ENCODE measurements at regions of chrX and their contacts with region 1.

Region 1: DNA sequence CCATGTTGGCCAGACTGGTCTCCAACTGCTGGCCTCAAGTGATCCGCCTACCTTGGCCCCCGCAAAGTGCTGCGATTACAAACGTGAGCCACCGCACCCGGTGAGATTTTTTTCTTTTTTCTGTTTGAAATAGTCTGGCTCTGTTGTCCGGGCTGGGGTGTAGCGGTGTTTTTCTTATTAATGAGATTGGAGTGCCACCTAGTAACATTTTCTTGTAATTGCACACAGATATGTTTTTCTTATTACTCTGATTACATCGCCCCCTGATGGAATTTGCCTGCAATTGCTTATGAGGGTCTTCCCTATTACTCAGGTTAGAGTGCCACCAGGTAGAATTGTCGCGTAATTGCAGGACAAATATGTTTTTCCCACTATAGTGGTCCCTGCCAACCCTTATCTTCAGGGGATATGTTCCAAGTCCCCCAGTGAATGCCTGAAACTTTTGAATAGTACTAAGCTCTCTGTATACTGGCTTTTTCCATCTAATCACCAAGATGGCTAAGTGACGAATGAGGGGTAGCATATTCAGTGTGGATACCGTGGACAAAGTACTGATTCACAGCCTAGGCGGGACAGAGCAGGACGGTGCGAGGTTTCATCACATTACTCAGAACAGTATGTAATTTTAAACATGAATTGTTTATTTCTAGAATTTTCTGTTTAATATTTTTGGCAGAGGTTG is 8.6 kb upstream of the PDHA1 start:
- DNase-seq: peak in 3 of 5 donors; percentile 10 to 22 (median 20)
- H3K4me3 ChIP-seq: no peak overlapping the region
- H3K4me3 Mint-ChIP-seq: no peak overlapping the region
- H3K27ac ChIP-seq: no peak overlapping the region
- H3K27ac Mint-ChIP-seq: peak overlapping the region in 4 of 7 donors; percentile 22 to 73 (median 36)
- H3K4me1 ChIP-seq: no peaks in the 10 kb centered on the region
- H3K4me1 Mint-ChIP-seq: peaks cover 0 to 3% (median under 1%) of the 10 kb centered on the region in 4 donors
- H3K27me3 ChIP-seq: no peaks in the 10 kb centered on the region
- H3K27me3 Mint-ChIP-seq: peaks cover 0 to 2% of the 10 kb centered on the region in 2 donors

Region 2: DNA sequence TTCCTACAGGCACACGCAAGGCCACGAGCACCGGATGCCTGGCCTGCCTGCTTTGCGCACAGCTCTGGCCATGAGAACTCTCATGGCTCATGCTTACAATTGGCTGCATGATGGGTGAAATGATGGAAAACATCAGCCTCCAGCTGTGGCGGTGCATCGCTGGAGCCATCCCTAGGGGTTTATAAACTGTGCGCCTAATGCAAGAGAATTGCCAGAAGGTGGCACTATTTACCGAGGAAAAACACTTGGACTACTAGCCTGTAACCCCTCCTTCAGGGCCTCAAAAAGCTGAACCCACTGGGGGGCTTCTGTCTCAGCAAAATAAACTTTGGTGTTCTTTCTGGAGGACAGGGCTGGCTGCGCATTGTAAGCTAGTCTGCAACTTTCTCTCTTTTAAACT is 403.1 kb before region 1 on chrX:
- CTCF ChIA-PET with region 1: interaction called, 15 read pairs
- POLR2A ChIA-PET with region 1: no interaction called
- intact Hi-C with region 1: no loop called
- DNase-seq: no peak
- H3K4me3 ChIP-seq: no peak overlapping the region
- H3K4me3 Mint-ChIP-seq: no peak overlapping the region
- H3K27ac ChIP-seq: no peak overlapping the region
- H3K27ac Mint-ChIP-seq: no peak overlapping the region
- H3K4me1 ChIP-seq: no peaks in the 10 kb centered on the region
- H3K4me1 Mint-ChIP-seq: no peaks in the 10 kb centered on the region
- H3K27me3 ChIP-seq: no peaks in the 10 kb centered on the region
- H3K27me3 Mint-ChIP-seq: no peaks in the 10 kb centered on the region

Region 3: GRCh38 chrX:19372170-19372546 is 37.1 kb after region 1 on chrX:
- CTCF ChIA-PET with region 1: no interaction called
- POLR2A ChIA-PET with region 1: no interaction called
- intact Hi-C with region 1: no loop called
- DNase-seq: peak; percentile 50 to 57 (median 55)
- H3K4me3 ChIP-seq: peak overlapping the region in 1 of 2 donors; percentile 47
- H3K4me3 Mint-ChIP-seq: peak overlapping the region; percentile 78 to 95 (median 86)
- H3K27ac ChIP-seq: no peak overlapping the region
- H3K27ac Mint-ChIP-seq: peak overlapping the region in 3 of 7 donors; percentile 13 to 85 (median 15)
- H3K4me1 ChIP-seq: no peaks in the 10 kb centered on the region
- H3K4me1 Mint-ChIP-seq: peaks cover 2 to 9% (median 5%) of the 10 kb centered on the region in 4 donors
- H3K27me3 ChIP-seq: no peaks in the 10 kb centered on the region
- H3K27me3 Mint-ChIP-seq: no peaks in the 10 kb centered on the region

Measured in CD4-positive, alpha-beta memory T cell (primary cell).